A673 (cell line): ENCODE measurements at regions of chr17 and their contacts with region 1.

Region 1: DNA sequence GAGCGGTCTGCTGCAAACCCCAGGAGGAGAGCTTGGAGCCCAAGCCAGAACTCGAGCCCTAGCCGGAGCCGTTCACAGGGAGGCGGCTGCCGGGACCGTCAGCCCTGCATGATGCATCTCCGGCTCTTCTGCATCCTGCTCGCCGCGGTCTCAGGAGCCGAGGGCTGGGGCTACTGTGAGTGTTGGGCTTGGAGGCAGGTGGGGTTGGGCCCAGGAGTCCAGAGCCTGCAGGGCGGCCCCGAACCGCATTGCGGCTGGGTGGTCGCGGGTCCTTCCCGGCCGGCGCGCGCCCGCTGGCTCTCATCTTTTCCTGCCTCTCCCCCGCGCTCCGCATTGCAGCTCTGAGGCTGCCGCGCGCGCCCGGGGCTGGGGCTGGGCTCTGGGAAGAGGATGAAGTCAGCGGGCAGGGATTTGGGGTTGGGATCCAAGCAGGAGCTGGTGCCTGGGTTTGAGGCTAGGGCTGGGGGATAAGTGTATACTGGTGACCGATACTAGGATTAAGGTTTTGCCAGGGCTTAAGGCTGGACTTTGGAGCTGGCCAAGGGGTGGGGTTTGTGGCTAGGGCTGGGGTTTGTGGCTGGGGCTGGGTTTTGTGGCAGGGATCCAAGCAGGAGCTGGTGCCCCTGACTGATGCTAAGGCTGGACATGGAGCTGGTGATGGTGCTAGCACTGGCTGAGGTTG is 532 bp downstream of the CNTNAP1 start:
- DNase-seq: peak; percentile 49
- H3K4me3 ChIP-seq: peak overlapping the region; percentile 52
- H3K27ac ChIP-seq: no peak overlapping the region
- H3K4me1 ChIP-seq: peaks cover 19% of the 10 kb centered on the region
- H3K27me3 ChIP-seq: no peaks in the 10 kb centered on the region
- CTCF ChIP-seq: no peak

Region 2: DNA sequence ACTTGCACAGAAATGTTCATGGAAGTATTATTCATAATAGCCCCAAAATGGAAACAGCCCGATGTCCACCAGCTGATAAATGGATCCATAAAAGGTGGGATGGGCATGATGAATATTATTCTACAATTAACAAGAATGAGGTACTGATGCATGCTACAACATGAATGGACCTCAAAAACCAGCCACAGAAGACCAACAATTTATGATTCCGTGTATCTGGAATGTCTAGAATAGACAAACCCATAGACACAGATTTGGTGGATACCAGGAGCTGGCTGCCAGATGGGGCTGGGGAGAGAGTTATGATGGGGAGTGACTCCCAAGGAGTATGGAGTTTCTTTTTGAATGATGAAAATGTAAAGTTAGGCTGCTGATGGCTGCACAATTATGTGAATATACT is 157.6 kb before region 1 on chr17:
- CTCF ChIA-PET with region 1: no interaction called
- POLR2A ChIA-PET with region 1: no interaction called
- intact Hi-C with region 1: no loop called
- DNase-seq: no peak
- H3K4me3 ChIP-seq: no peak overlapping the region
- H3K27ac ChIP-seq: no peak overlapping the region
- H3K4me1 ChIP-seq: peaks cover 1% of the 10 kb centered on the region
- H3K27me3 ChIP-seq: no peaks in the 10 kb centered on the region
- CTCF ChIP-seq: no peak

Region 3: DNA sequence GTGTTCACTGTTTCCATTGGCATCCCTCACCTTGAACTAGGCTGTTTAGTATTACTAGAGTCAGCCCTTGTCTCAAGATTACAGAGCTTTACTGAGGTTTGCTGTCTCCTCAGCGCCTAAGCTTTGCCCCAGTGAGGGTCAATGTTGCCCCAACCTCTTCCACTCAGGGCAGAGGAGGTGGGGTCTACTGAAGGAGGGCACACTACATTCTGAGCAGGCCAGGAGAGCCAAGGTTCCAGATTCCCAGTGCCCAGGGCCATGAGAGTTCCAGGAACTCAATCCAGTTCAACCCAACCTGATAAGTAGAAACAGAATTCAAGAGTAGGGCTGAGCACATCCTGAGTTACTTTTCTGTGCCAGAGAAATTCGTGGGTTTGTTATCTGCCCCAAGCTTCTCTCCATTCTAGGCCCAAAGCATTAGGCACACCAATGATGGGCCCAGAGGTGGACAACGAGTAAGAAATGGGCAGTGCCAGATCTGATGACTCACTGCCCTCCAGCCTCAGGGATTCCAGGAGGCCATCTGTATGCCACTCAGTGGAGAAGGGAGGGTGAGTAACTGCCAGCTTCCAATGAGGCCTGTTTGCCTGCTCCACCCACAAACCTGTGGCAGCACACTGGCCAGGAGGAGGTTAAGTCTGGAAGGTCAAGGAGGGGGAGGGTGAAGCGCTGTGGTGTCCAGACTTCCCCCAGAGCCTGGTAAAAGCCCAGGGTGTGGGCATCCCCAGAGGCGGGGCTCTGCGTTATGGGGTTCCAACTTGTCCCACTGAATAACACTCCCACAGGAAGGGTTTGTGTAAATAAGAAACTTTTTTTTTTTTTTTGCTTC is 15.5 kb before region 1 on chr17:
- CTCF ChIA-PET with region 1: no interaction called
- POLR2A ChIA-PET with region 1: interaction called, 13 read pairs
- intact Hi-C with region 1: no loop called
- DNase-seq: no peak
- H3K4me3 ChIP-seq: no peak overlapping the region
- H3K27ac ChIP-seq: no peak overlapping the region
- H3K4me1 ChIP-seq: no peaks in the 10 kb centered on the region
- H3K27me3 ChIP-seq: no peaks in the 10 kb centered on the region
- CTCF ChIP-seq: no peak

Region 4: DNA sequence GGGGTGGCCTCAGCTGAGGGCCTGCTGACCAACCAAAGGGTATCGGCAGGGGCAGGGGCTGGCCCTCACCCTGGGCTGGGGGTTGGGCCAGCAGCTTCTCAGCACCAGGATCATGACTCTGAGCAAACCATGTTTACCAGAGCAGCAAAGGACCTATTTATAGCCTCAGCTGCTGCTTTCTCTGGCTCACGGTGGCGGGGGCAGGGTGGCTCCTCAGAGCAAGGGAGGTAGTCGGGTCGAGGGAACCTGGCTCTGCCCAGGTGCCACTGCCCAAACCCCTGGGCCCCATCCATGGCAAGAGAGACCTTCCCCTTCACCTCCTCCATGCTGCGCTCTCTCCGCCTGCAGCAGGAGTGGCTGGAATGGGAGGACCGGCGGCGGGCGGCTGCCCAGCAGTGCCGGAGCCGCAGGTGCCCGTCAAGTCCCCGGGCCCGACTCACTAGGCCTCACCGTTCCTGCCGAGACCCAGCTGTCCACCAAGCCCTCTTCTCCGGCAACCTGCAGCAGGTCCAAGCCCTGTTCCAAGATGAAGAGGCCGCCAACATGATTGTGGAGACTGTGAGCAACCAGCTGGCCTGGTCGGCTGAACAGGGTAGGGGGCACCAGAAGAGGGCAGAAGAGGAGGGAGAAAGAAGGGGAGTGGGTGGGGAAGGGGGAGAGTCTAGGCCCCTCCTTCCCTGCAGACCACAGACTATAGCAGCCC is 1487.8 kb after region 1 on chr17 and contains the start of gene ASB16:
- CTCF ChIA-PET with region 1: interaction called, 17 read pairs
- POLR2A ChIA-PET with region 1: no interaction called
- intact Hi-C with region 1: no loop called
- DNase-seq: no peak
- H3K4me3 ChIP-seq: no peak within 1 kb of the TSS
- H3K27ac ChIP-seq: no peak within 1 kb of the TSS
- H3K4me1 ChIP-seq: no peaks in the 10 kb centered on the region
- H3K27me3 ChIP-seq: no peaks in the 10 kb centered on the region
- CTCF ChIP-seq: no peak
- total RNA-seq, gene ASB16: 0.17 TPM in 1 of 2 replicates, not detected in the other